ENCODE measurements at regions of chrX and their contacts with region 1.

Region 1: DNA sequence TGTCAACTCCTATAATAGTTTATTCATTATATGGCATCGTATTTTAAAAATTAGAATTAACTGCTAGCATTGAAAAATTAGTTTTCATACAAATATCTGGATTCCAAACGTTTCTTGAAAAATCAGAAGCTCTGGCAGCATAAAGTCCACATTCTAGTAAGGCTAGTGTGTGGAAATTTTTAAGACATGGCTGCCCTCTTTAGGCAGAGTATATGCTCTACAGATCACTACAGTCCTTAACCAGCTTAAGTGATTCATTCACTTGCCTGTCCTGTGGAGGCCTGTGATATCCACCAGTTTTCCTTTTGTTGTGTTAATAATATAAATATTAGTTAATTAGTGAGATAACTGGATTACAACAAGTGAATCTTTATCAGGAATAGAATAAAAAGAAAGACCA is 287.2 kb downstream of the OPHN1 start:
- DNase-seq: peak; percentile 7
- H3K4me3 ChIP-seq: no peak overlapping the region
- CTCF ChIP-seq: peak; percentile 32

Region 2: GRCh38 chrX:67673741-67674274 is 472.2 kb before region 1 on chrX:
- CTCF ChIA-PET with region 1: no interaction called
- POLR2A ChIA-PET with region 1: no interaction called
- DNase-seq: no peak
- H3K4me3 ChIP-seq: no peak overlapping the region
- CTCF ChIP-seq: no peak

Region 3: DNA sequence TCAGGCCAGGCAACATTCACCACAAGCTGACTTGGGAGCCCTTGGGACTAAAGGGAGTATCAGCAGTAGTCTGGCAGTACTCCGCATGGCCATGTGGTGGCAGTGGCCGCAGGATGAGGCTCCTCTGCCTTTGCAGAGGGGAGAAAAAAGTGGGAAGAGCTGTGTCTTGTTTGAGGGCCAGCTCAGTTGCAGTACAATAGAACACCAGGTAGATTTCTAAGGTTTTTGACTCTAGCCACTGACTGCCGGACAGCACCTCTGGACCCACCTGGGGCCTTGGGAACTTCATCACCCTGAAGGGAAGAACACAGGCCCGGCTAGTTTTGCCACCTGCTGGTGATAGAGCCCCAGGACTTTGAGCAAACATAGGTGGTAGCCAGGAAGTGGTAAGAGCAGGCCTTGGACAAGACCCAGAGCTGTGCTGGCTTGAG is 127.4 kb before region 1 on chrX:
- CTCF ChIA-PET with region 1: interaction called, 38 read pairs
- POLR2A ChIA-PET with region 1: no interaction called
- DNase-seq: no peak
- H3K4me3 ChIP-seq: no peak overlapping the region
- CTCF ChIP-seq: peak; percentile 66